ENCODE measurements at regions of chr4 and their contacts with region 1.

Region 1: DNA sequence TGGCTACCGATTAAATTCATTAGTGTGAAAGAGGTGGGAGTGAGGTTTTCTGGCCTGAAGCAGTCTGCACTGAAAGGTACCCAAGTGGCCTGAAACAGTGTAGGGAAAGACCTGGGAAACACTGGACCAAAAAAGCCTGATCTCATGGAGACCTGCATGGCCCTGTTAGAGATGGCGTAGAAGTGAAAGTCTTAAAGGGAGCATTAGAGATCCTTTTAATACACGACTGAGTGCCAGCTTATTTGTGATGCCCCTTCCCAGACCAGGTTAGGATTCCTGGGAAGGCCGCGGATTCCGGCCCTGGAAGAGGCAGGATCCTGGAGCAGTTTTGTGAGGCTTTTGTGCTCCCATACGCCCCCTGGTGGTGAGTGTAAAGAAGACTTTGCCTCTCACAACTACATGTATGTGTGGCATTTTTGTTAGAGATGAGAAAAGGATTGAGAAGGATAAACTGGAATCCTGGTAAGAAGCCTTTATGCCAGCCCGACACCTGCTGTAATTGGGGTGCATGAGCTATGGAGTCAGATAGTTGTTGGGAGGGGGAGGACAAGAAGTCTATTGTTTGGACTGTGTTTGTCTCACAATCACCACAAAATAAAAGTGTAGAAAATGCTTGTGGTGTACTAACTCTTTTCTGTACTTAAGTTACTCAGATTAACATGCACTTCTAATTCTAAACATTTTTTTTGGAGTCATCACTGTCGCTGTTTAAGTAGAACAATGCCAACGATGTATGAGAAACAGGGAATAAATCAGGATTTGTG is 54.0 kb downstream of the JADE1 start:
- DNase-seq: peak in 1 of 2 donors; percentile 82
- H3K4me3 ChIP-seq: no peak overlapping the region
- H3K27ac ChIP-seq: peak overlapping the region; percentile 29 to 30
- H3K4me1 ChIP-seq: peaks cover 0 to 18% of the 10 kb centered on the region in 2 donors
- H3K27me3 ChIP-seq: no peaks in the 10 kb centered on the region
- CTCF ChIP-seq: peak; percentile 62 to 89 (median 75)

Region 2: DNA sequence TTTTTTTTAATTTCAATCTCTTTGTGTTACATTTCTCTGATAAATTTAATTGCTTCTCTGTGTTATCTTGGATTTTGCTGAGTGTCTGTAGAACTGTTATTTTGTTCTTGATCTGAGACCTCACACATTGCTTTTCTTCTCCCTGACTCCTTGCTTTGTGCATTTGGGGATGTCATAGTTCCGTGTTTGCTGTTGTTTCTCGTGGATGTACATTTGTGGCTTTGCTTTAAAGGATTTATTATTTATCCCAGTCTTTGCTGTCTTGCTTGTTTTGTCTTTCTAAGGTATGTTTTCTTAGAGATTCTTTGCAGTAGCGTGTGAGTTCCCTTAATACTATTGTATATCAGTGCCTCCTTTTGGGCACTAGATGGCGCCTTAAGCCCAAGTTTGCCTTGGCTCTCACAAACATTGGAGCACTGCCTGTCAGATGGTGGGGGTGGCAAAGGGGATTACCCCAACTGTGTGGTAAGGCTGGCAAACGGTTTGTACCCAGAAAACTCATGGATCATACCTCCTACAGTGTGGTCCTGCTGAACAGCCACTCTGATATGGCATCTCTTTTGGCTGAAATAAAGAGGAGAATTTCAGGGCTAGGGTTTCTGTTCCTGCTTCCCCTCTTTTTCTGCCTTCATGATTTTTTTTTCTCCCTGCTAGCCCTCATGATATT is 672.2 kb before region 1 on chr4:
- intact Hi-C with region 1: loop called (anchors 1 kb)
- DNase-seq: peak in 1 of 2 donors; percentile 74
- H3K4me3 ChIP-seq: no peak overlapping the region
- H3K27ac ChIP-seq: no peak overlapping the region
- H3K4me1 ChIP-seq: peaks cover 0 to 3% of the 10 kb centered on the region in 2 donors
- H3K27me3 ChIP-seq: no peaks in the 10 kb centered on the region
- CTCF ChIP-seq: peak; percentile 43 to 90 (median 86)

Region 3: DNA sequence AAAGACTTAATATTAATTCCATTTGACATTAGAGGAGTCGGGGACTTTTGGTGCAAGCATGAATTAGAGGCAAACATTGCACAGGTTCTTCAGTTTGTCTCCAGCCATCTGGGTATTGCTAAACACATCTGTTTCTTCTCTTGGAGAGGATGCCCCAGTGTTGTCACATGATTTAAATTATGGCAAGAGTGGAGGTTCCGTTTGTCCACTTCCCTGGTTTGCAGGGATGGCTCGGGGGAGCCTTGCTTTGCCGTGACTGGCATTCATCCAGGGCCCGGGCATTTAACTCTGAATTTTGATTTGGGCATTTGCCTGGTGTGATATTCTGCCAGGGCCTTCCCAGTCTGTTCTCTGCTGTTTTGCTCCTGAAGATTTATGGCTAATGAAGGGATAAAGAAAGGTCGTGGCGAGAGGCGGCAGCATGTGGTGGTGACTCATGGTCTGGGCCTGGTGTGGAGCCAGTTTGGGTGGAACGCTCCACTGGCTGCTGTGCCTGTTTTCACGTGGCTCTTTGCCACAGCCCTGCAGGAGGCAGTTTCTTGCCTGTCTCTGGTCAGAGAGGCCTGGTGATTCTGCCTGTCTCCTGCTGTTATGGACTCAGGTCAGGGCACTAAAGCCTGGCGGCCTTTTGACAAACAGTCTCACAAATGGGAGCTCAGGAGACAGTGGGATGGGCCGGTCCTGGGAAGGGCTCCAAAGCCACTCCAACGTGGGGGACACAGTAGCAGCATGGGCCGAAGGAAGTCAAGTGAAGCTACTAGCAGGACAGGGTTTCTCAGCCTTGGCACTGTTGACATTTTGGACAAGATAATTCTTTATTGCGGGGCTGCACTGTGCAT is 476.5 kb before region 1 on chr4:
- intact Hi-C with region 1: loop called (anchors 1 kb)
- DNase-seq: peak; percentile 63 to 95
- H3K4me3 ChIP-seq: peak overlapping the region in 1 of 2 donors; percentile 38
- H3K27ac ChIP-seq: peak overlapping the region; percentile 58 to 69
- H3K4me1 ChIP-seq: peaks cover 0 to 21% of the 10 kb centered on the region in 2 donors
- H3K27me3 ChIP-seq: no peaks in the 10 kb centered on the region
- CTCF ChIP-seq: no peak

Region 4: DNA sequence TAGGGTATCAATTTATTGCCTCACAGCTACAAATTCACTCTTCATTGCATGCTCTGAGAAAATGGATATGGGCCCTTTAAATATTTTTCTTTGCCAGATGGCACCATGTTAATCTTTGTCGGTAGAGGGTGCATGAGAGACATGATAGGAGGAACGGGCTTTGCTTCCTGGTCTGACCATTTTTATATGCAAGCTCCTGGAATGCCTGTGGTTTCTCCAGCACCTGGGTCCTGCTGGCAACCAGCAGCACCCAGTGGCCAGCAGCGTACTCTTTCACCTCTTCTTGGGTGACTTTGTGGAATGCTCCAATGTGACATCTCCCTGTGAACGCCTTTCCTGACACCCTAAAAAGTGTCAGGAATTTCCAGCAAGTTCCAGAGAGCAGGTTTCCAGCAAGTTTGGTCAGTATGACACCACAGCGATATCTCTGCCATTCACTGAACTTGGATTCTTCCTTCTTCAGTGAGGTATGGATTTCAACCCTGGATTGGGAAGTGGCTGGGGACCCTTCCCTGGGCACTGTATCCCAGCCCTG is 435.6 kb before region 1 on chr4:
- intact Hi-C with region 1: loop called (anchors 5 kb)
- DNase-seq: no peak
- H3K4me3 ChIP-seq: no peak overlapping the region
- H3K27ac ChIP-seq: no peak overlapping the region
- H3K4me1 ChIP-seq: no peaks in the 10 kb centered on the region
- H3K27me3 ChIP-seq: no peaks in the 10 kb centered on the region
- CTCF ChIP-seq: peak in 2 of 3 experiments; percentile 25 to 40

Region 5: GRCh38 chr4:128565565-128566186 is 297.8 kb before region 1 on chr4:
- intact Hi-C with region 1: loop called (anchors 5 kb)
- DNase-seq: no peak
- H3K4me3 ChIP-seq: no peak overlapping the region
- H3K27ac ChIP-seq: no peak overlapping the region
- H3K4me1 ChIP-seq: no peaks in the 10 kb centered on the region
- H3K27me3 ChIP-seq: no peaks in the 10 kb centered on the region
- CTCF ChIP-seq: peak in 2 of 3 experiments; percentile 22 to 40